Panc1 (cell line): ENCODE measurements at regions of chr5 and their contacts with region 1.

Region 1: GRCh38 chr5:67319935-67320725 is 123.5 kb upstream of the CD180 start:
- DNase-seq: no peak
- ATAC-seq: no peak
- H3K4me3 ChIP-seq: no peak overlapping the region
- H3K27ac ChIP-seq: no peak overlapping the region
- H3K4me1 ChIP-seq: no peaks in the 10 kb centered on the region
- H3K27me3 ChIP-seq: no peaks in the 10 kb centered on the region
- CTCF ChIP-seq: no peak

Region 2: DNA sequence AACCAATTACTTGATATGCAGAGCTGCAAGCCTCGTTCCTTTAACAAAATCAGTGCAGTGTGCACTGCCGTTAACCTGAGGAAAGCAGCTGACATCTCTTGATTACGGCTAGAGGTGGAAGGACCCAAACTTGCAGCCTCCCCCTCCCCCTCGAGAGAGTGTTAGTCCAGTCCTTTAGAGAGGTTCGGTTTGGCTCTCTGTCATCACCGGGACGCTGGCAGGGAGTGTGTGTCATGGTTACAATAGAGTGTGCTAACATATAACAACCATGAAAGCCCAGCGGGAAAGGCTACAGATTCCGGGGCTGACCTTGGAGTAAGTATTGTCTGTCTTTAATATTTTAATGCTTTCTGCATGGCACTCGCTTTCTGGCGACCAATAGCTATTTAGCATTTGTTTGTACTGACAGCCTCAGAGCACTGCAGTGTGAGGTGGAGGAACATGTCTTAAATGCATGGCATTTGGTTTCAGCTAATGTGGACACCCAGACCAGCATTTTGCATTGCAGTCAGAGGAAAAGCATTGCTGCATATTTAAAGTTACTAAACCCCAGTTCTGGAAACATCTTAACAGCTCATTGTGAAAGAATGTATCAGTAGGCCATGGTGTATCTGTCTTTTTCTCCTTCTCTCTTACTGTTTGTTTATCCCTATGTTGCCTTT is 361.0 kb before region 1 on chr5:
- CTCF ChIA-PET with region 1: no interaction called
- POLR2A ChIA-PET with region 1: no interaction called
- in situ Hi-C with region 1: no loop called
- intact Hi-C with region 1: no loop called
- DNase-seq: no peak
- ATAC-seq: peak; percentile 75
- H3K4me3 ChIP-seq: peak overlapping the region in 1 of 2 experiments; percentile 38; a peak in 2 of 4 replicates
- H3K27ac ChIP-seq: no peak overlapping the region
- H3K4me1 ChIP-seq: peaks cover 5% of the 10 kb centered on the region; the same call in 1 of the 2 replicates
- H3K27me3 ChIP-seq: no peaks in the 10 kb centered on the region
- CTCF ChIP-seq: no peak

Region 3: GRCh38 chr5:67364381-67364970 is 44.3 kb after region 1 on chr5:
- CTCF ChIA-PET with region 1: interaction called, 16 read pairs
- POLR2A ChIA-PET with region 1: no interaction called
- in situ Hi-C with region 1: no loop called
- intact Hi-C with region 1: no loop called
- DNase-seq: no peak
- ATAC-seq: no peak
- H3K4me3 ChIP-seq: no peak overlapping the region
- H3K27ac ChIP-seq: no peak overlapping the region
- H3K4me1 ChIP-seq: no peaks in the 10 kb centered on the region
- H3K27me3 ChIP-seq: no peaks in the 10 kb centered on the region
- CTCF ChIP-seq: no peak